Naive thymus-derived CD4-positive, alpha-beta T cell (primary cell): ENCODE measurements at regions of chr6 and their contacts with region 1.

Region 1: DNA sequence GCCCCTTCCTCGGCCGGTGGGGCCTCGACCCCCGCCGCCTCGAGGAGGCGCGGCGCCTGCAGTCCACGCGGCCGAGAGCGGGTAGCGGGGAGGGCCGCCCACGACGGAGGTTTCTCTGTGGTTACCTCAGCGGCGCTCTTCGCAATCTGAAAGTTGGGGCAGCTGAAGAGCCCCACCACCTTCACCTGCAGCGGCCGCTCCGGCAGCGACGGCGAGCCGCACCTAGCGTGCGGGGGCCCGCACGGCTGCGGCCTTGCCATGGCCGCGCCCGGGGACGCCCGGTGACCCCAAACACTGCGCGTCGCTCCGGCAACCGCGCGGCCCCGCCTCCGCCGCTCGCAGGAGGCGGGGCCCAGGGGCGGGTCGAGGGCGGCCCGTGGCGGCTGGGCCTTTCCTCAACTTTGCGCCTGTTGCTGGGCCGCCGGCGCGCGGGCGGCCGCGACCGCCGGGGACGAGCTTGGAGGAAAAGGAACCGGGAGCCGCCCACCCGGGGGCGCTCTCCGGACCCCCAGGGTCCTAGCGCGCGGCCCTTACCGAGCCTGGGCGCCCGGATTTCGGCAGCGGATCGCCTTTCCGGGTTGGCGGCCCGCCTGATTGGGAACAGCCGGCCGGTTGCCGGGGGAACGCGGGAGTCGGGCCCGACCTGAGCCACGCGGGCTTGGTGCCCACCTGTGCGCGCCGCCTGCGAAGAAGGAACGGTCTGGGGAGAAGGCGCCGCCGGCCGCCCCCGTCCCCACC is at the starts of genes PPIL6 and SMPD2:
- DNase-seq: peak; percentile 63 to 85 (median 77)
- ATAC-seq: peak; percentile 91
- H3K4me3 ChIP-seq: peak within 1 kb of the TSS; percentile 65
- H3K4me3 Mint-ChIP-seq: peak within 1 kb of the TSS; percentile 90 to 95 (median 94)
- H3K27ac ChIP-seq: peak within 1 kb of the TSS; percentile 98
- H3K27ac Mint-ChIP-seq: peak within 1 kb of the TSS; percentile 87 to 97 (median 93)
- H3K4me1 ChIP-seq: peaks cover 11% of the 10 kb centered on the region in 2 donors
- H3K4me1 Mint-ChIP-seq: peaks cover 10 to 32% (median 21%) of the 10 kb centered on the region in 7 donors
- H3K27me3 ChIP-seq: no peaks in the 10 kb centered on the region
- H3K27me3 Mint-ChIP-seq: peaks cover 0 to 2% (median 0%) of the 10 kb centered on the region in 5 donors
- total RNA-seq, gene PPIL6: 0.13 to 1.9 (median 0.40) TPM in 4 of 5 experiments, not detected in the other
- total RNA-seq, gene SMPD2: 16.9 to 33.7 (median 19.6) TPM

Region 2: GRCh38 chr6:109236115-109237076 is 204.1 kb before region 1 on chr6:
- CTCF ChIA-PET with region 1: no interaction called
- POLR2A ChIA-PET with region 1: no interaction called
- intact Hi-C with region 1: loop called in 1 of 2 experiments (anchors 2 kb)
- DNase-seq: peak in 3 of 9 donors; percentile 12 to 34 (median 32)
- ATAC-seq: peak; percentile 56
- H3K4me3 ChIP-seq: no peak overlapping the region
- H3K4me3 Mint-ChIP-seq: peak overlapping the region; percentile 0 to 73 (median 26)
- H3K27ac ChIP-seq: no peak overlapping the region
- H3K27ac Mint-ChIP-seq: peak overlapping the region in 8 of 9 donors; percentile 2 to 90 (median 42)
- H3K4me1 ChIP-seq: no peaks in the 10 kb centered on the region
- H3K4me1 Mint-ChIP-seq: peaks cover 6 to 25% (median 18%) of the 10 kb centered on the region in 7 donors
- H3K27me3 ChIP-seq: no peaks in the 10 kb centered on the region
- H3K27me3 Mint-ChIP-seq: peaks cover 0 to 3% (median 0%) of the 10 kb centered on the region in 5 donors

Region 3: DNA sequence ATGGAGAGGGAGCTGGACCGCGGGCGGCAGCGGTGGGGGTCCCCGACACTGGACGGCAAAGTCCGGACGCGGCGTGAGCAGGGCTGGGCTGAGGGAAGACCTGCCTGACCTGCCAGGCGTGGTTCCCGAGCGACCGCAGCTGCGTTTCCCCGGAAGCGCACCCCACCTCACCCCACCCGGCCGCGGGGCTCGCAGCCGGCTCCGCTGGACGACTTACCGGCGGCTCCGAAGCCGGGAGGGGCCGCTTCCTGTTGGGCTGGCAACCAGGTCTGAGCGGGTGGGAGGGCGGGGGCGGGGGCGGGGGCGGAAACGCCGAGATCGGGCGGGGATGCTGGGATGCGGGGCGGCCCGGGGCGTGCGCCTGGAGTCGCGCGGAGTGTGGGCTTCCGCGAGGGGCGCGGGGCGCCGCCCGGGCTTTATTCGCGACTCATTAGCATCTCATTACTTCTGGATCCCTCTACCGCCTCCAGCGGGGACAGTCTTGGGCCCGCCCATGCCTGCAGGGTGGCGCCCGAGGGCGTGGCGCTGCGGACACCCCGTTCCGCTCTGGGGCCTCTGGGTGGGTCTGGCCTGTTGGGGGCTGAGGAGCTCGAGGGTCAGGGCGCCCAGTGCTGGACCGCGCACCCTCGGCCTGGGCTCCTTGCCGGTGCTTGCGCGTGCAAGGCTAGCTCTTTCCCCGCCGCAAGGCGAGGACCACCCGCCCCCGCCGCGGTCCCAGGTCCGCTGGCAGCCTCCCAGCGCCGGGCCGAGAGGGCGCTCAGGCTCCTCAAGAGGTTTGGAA is 15.2 kb after region 1 on chr6 and contains the start of gene MICAL1:
- CTCF ChIA-PET with region 1: interaction called, 4 read pairs
- POLR2A ChIA-PET with region 1: interaction called, 49 read pairs
- intact Hi-C with region 1: loop called (anchors 1 kb)
- DNase-seq: peak; percentile 55 to 79 (median 72)
- ATAC-seq: peak; percentile 82
- H3K4me3 ChIP-seq: peak within 1 kb of the TSS; percentile 81
- H3K4me3 Mint-ChIP-seq: peak within 1 kb of the TSS; percentile 95 to 99 (median 97)
- H3K27ac ChIP-seq: peak within 1 kb of the TSS; percentile 94
- H3K27ac Mint-ChIP-seq: peak within 1 kb of the TSS; percentile 83 to 99 (median 97)
- H3K4me1 ChIP-seq: peaks cover 40 to 45% of the 10 kb centered on the region in 2 donors
- H3K4me1 Mint-ChIP-seq: peaks cover 29 to 68% (median 62%) of the 10 kb centered on the region in 7 donors
- H3K27me3 ChIP-seq: no peaks in the 10 kb centered on the region
- H3K27me3 Mint-ChIP-seq: no peaks in the 10 kb centered on the region
- total RNA-seq, gene MICAL1: 61.4 to 125 (median 78.7) TPM

Region 4: DNA sequence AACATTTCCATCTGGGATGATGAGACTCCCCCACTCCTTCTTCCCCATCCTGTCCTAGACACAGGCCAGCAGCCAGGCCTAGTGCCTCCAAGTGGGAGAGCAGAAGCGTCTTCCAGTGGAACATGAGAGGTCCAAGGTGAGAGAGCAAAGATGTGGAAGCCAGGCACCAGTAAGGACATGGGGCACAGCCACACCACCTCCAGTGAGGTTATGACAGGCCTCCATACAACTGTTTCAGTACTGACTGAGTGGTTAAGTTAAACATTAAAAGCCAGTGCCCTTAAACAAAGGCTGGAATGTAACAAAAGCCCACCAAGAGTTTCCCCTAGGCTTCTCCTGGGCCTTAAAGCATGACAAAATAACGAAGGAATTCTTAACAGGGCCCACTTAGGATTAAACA is 37.2 kb after region 1 on chr6:
- CTCF ChIA-PET with region 1: interaction called, 4 read pairs
- POLR2A ChIA-PET with region 1: interaction called, 13 read pairs
- intact Hi-C with region 1: no loop called
- DNase-seq: no peak
- ATAC-seq: no peak
- H3K4me3 ChIP-seq: peak overlapping the region; percentile 10
- H3K4me3 Mint-ChIP-seq: peak overlapping the region; percentile 71 to 99 (median 91)
- H3K27ac ChIP-seq: peak overlapping the region; percentile 57
- H3K27ac Mint-ChIP-seq: peak overlapping the region in 7 of 9 donors; percentile 38 to 94 (median 79)
- H3K4me1 ChIP-seq: peaks cover 45 to 67% of the 10 kb centered on the region in 2 donors
- H3K4me1 Mint-ChIP-seq: peaks cover 57 to 92% (median 83%) of the 10 kb centered on the region in 7 donors
- H3K27me3 ChIP-seq: no peaks in the 10 kb centered on the region
- H3K27me3 Mint-ChIP-seq: no peaks in the 10 kb centered on the region

Region 5: DNA sequence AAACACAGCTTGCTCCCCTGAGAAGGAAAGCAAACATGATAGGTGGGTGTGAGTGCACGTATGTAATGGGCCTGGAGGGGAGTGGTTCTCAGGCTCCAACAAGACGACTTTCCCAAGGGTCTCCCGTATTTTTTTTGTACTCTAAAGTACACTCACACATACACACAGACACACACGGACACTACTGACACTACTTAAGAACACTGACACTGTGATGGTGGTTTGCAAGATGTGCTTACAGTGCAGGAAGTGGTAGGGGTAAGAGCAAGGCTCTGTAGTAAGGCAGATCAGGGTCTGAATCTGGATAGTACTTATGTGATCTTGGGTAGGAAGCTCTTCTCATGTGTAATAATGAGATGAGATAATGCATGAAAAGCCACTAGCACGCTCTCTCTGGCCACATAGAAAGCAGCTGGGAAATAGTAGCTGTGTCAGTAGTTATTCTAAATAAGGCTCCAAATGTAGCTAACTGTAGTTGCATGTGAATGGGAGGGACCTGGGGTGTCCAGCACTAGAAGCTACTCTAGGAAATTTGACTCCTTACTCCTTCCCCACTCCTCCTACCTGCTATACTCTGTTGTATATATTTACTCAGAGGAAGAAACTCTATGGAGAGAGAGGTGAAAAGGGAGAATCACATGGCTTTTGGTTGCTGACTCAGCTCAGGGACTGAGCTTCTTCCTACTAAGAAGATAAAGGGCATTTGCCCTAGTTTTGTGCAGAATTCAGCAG is 50.9 kb after region 1 on chr6:
- CTCF ChIA-PET with region 1: no interaction called
- POLR2A ChIA-PET with region 1: interaction called, 11 read pairs
- intact Hi-C with region 1: no loop called
- DNase-seq: peak in 6 of 9 donors; percentile 23 to 57 (median 39)
- ATAC-seq: peak; percentile 92
- H3K4me3 ChIP-seq: no peak overlapping the region
- H3K4me3 Mint-ChIP-seq: peak overlapping the region in 8 of 10 donors; percentile 4 to 70 (median 42)
- H3K27ac ChIP-seq: peak overlapping the region; percentile 1
- H3K27ac Mint-ChIP-seq: peak overlapping the region; percentile 19 to 84 (median 60)
- H3K4me1 ChIP-seq: peaks cover 15 to 17% of the 10 kb centered on the region in 2 donors
- H3K4me1 Mint-ChIP-seq: peaks cover 12 to 36% (median 25%) of the 10 kb centered on the region in 7 donors
- H3K27me3 ChIP-seq: no peaks in the 10 kb centered on the region
- H3K27me3 Mint-ChIP-seq: peaks cover 0 to 5% (median 0%) of the 10 kb centered on the region in 5 donors